HEK293 (cell line): ENCODE measurements at regions of chr12 and their contacts with region 1.

Region 1: GRCh38 chr12:13278249-13278787 is 81.8 kb downstream of the EMP1 start:
- H3K4me3 ChIP-seq: no peak overlapping the region
- H3K27ac ChIP-seq: no peak overlapping the region
- H3K4me1 ChIP-seq: no peaks in the 10 kb centered on the region
- CTCF ChIP-seq: peak; percentile 84

Region 2: DNA sequence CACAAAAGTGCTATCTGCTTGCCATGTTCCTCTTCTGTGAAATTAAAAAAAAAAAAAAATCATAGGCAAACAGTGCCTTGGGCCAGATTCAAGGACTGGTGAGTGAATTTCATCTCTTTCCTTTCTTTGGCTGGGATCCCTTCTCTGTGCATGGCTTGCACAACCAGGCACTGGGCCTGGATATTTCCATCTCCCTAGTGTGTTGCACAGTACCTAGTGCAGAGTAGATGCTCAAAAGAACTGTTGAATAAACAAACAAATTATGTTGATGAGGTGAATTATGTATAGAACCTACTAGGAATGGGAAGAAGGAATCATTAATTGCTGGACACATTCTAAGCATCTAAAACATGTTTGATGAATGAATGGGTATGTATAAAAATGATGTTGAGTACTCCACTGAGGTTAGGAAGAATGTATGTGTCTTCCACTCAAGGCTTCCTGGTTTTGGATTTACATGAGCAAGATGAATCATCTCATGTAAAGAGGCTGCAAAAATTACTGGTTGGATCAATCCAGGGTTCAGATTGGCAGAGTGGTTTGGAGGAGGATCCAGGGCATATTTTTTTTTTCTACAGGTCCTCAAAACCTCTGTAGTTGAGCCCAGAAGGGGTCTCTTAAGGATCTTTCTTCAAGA is 11.5 kb after region 1 on chr12:
- CTCF ChIA-PET with region 1: interaction called, 11 read pairs
- POLR2A ChIA-PET with region 1: no interaction called
- H3K4me3 ChIP-seq: no peak overlapping the region
- H3K27ac ChIP-seq: no peak overlapping the region
- H3K4me1 ChIP-seq: no peaks in the 10 kb centered on the region
- CTCF ChIP-seq: no peak

Region 3: GRCh38 chr12:13404631-13405473 is 126.5 kb after region 1 on chr12:
- CTCF ChIA-PET with region 1: interaction called, 10 read pairs
- POLR2A ChIA-PET with region 1: no interaction called
- H3K4me3 ChIP-seq: no peak overlapping the region
- H3K27ac ChIP-seq: no peak overlapping the region
- H3K4me1 ChIP-seq: no peaks in the 10 kb centered on the region
- CTCF ChIP-seq: no peak